ENCODE measurements at regions of chr1 and their contacts with region 1.

Region 1: GRCh38 chr1:37595440-37596319 is at the start of gene GNL2:
- DNase-seq: peak; percentile 87
- ATAC-seq: peak; percentile 100
- H3K4me3 ChIP-seq: peak within 1 kb of the TSS; percentile 99 to 100
- H3K27ac ChIP-seq: peak within 1 kb of the TSS; percentile 98
- H3K4me1 ChIP-seq: peaks cover 9% of the 10 kb centered on the region
- H3K27me3 ChIP-seq: no peaks in the 10 kb centered on the region
- CTCF ChIP-seq: no peak
- total RNA-seq, gene GNL2: 73.4 TPM

Region 2: GRCh38 chr1:37647281-37647680 is 51.6 kb after region 1 on chr1:
- CTCF ChIA-PET with region 1: no interaction called
- POLR2A ChIA-PET with region 1: interaction called, 11 read pairs
- in situ Hi-C with region 1: no loop called
- intact Hi-C with region 1: no loop called
- DNase-seq: no peak
- ATAC-seq: no peak
- H3K4me3 ChIP-seq: no peak overlapping the region
- H3K27ac ChIP-seq: no peak overlapping the region
- H3K4me1 ChIP-seq: no peaks in the 10 kb centered on the region
- H3K27me3 ChIP-seq: peaks cover 3% of the 10 kb centered on the region; the same call in 1 of the 2 replicates
- CTCF ChIP-seq: no peak

Region 3: GRCh38 chr1:37692078-37692833 is 96.6 kb after region 1 on chr1 and contains the start of gene CDCA8:
- CTCF ChIA-PET with region 1: interaction called, 3 read pairs
- POLR2A ChIA-PET with region 1: no interaction called
- in situ Hi-C with region 1: loop called (anchors 5 kb)
- intact Hi-C with region 1: no loop called
- DNase-seq: peak; percentile 91
- ATAC-seq: peak; percentile 93
- H3K4me3 ChIP-seq: peak within 1 kb of the TSS; percentile 90 to 100
- H3K27ac ChIP-seq: peak within 1 kb of the TSS; percentile 92
- H3K4me1 ChIP-seq: peaks cover 19% of the 10 kb centered on the region
- H3K27me3 ChIP-seq: no peaks in the 10 kb centered on the region
- CTCF ChIP-seq: peak; percentile 81
- total RNA-seq, gene CDCA8: 56.5 TPM

Measured in Panc1 (cell line).